A549 (cell line): ENCODE measurements at regions of chr20 and their contacts with region 1.

Region 1: DNA sequence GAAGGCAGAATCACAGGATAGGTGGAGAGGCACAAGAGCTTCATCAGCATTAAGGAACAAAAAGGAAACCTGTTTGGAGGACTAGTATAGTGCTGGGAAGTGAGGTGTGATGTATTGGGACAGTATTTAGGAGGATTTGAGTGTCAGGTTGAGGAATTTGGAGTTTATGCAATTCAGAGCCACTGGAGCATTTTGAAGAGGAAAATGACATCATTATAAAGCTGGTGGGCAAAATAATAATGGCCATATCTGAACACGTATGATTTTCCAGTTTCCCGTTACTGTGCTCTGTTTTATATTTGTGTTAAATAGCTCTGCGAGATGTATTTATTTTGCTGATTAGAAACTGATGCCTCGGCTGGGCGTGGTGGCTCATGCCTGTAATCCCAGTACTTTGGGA is 14.2 kb downstream of the NDUFAF5 start:
- DNase-seq: no peak
- ATAC-seq: no peak
- H3K4me3 ChIP-seq: no peak overlapping the region
- H3K27ac ChIP-seq: no peak overlapping the region
- H3K4me1 ChIP-seq: peaks cover 8% of the 10 kb centered on the region
- CTCF ChIP-seq: no peak
- EP300 ChIP-seq: no peak
- POLR2A ChIP-seq: no peak
- RAD21 ChIP-seq: no peak

Region 2: DNA sequence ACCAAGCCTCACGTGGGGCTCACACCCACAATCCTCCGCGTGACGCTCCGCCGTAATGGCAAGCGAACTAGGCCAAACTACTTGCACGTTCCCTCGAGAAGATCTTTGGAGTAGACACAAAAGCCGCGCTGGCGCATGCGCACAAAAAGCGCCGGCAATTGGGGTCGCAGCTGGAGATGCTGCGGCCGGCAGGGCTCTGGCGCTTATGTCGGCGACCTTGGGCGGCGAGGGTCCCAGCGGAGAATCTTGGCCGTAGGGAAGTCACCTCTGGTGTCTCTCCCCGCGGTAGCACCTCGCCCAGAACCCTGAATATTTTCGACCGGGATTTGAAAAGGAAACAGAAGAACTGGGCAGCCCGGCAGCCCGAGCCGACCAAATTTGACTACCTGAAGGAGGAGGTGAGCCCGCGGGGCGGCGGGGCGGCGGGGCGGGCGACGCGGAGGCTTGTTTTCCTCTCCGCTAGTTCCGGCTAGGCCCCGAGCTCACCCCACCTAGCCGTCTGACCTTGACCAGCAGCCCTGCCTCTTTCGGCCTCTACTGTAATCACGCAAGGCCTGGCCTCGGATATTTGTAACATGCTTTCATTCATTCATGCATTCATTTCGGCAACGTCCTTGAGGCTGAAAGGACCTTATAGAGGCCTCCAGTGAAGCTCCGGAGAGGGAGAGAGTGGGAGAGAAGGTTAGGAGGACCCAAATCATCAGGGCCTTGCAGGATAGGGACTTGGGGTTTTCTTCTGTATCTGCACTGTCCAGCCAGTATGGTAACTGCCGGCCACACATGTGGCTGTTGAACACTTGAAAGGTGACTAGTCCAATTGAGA is 14.0 kb before region 1 on chr20 and contains the starts of genes ESF1 and NDUFAF5:
- CTCF ChIA-PET with region 1: interaction called, 13 read pairs
- POLR2A ChIA-PET with region 1: interaction called, 7 read pairs
- DNase-seq: peak; percentile 97 to 99
- ATAC-seq: peak; percentile 95 to 98
- H3K4me3 ChIP-seq: peak within 1 kb of the TSS; percentile 93
- H3K27ac ChIP-seq: peak within 1 kb of the TSS; percentile 86 to 94
- H3K4me1 ChIP-seq: peaks cover 29% of the 10 kb centered on the region
- CTCF ChIP-seq: no peak
- EP300 ChIP-seq: no peak
- POLR2A ChIP-seq: peak; percentile 94
- RAD21 ChIP-seq: no peak
- polyA plus RNA-seq, gene ESF1: 12.2 and 30.5 TPM in 2 replicates
- polyA plus RNA-seq, gene NDUFAF5: 36.6 and 53.5 TPM in 2 replicates

Region 3: DNA sequence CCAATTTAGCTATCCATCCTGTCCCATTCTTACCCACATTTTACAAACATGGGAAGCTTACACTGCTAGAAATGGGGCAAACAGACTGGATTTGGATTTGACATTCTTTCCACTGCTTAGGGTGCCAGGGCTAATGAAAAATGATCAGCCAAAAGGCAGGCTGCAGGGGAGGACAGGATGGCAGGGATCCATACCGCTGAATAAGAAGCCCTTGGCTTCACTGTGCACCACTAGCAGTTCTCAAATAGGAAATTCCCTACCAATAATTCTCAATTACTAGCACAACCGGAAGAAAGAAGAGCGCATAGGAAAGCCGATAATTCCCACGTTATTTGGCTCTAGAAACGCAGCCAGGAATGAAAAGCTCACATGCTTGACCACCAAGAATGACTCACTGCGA is 58.9 kb after region 1 on chr20:
- CTCF ChIA-PET with region 1: no interaction called
- POLR2A ChIA-PET with region 1: no interaction called
- DNase-seq: no peak
- ATAC-seq: no peak
- H3K4me3 ChIP-seq: no peak overlapping the region
- H3K27ac ChIP-seq: no peak overlapping the region
- H3K4me1 ChIP-seq: no peaks in the 10 kb centered on the region
- CTCF ChIP-seq: no peak
- EP300 ChIP-seq: no peak
- POLR2A ChIP-seq: no peak
- RAD21 ChIP-seq: no peak

Region 4: DNA sequence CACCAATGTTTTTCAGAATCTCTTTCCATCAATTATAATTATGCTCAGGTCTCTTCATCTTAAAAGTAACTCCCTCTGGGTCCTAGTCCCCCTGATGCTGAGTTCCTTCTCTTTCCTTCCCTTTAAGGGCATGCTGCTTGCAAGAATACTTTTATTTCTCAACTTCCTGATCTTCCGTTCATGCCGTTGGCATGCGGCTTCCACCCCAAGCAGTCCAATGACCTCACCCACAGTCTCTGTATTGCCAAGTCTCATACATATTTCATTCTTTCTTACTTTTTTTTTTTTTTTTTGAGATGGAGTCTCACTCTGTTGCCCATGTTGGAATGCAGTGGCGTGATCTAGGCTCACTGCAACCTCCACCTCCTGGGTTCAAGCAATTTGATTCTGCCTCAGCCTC is 69.3 kb after region 1 on chr20:
- CTCF ChIA-PET with region 1: no interaction called
- POLR2A ChIA-PET with region 1: no interaction called
- DNase-seq: peak in 1 of 2 experiments; percentile 11
- ATAC-seq: no peak
- H3K4me3 ChIP-seq: no peak overlapping the region
- H3K27ac ChIP-seq: no peak overlapping the region
- H3K4me1 ChIP-seq: no peaks in the 10 kb centered on the region
- CTCF ChIP-seq: no peak
- EP300 ChIP-seq: no peak
- POLR2A ChIP-seq: no peak
- RAD21 ChIP-seq: no peak